AG04449 (cell line): ENCODE measurements at regions of chr1 and their contacts with region 1.

Region 1: DNA sequence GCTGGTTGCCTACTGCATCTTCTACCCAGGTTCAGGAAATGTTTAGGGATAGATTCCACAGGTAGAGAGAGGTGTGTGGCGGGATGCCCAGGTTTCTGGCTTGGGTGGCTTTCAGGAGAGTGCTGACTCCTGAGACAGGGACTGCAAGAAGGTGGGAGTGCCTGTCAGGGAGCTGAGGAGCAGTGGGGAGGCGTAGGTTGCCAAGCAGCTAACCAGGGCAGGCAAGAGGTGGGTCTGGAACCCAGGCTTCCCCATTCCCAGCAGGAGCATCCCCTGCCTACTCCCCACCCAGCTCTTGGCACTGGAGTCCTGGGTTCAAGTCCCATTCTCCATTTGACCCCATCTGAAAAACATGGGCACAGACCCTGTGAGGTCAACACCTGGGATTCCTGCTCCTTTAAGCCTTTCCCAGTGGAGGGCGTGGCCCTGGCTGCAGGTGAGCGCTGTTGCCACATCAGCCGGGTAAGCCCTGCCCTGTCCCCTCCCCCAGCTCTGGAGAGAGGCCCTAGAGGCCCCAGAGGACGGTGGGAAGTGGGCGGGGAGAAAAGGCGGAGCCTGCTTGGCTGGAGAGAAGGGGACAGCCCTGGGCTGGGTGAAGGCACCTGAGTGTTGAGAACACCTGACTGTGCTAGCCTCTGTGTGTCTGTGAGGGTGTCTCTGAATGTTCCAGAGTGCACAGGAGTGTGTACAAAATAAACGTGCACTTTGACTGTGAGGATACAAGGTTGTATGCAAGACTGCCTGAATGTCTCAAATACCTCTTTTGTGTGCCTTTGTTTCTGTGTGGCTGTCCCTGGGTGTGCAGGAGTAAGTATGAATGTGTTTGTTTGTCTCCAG is 14.0 kb upstream of the SYNC start:
- DNase-seq: no peak
- H3K4me3 ChIP-seq: no peak overlapping the region
- CTCF ChIP-seq: no peak

Region 2: DNA sequence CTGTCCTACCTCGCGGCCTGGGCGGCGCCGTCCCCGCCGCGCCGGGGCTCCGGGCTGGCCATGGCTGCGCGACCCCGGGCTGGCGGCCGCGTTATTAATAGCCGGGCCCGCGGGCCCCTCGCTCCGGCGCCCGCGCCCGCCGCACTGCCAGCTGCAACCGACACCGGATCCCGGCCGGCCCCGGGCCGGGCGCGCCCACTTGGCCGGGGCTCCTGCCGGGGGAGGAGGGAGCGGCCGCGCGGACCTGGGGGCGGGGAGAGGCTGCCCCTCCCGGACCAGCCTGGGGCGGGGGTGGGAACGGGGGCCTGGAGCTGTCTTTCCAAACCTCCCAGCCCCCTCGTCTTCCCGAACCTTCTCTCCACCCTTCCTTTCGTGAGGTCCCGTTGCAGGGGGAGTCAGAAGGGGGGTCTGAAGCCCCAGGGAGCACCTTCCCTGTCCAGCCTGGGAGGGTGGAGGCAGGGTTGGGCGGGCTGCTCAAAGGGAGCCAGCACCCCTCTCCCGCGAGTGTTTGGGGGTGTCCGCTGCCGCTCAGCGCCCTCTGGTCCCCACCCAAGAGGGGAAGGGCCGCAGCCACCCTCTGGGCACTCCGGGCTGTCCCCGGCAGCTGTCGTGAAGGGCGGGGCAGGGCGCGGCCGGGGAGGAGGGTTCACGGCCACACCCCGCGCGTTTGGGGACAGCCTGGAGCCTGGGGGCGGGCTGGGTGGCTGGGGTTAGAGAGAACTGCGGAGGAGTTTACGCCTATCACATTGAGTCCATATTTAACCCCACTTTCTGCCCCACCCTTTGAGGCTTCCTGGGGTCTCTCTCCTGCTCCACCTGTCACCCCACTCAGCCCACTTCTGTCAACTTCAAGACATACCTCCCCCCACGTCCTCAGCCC is 13.7 kb before region 1 on chr1 and contains the start of gene SYNC:
- CTCF ChIA-PET with region 1: interaction called, 19 read pairs
- POLR2A ChIA-PET with region 1: interaction called, 15 read pairs
- DNase-seq: peak; percentile 71
- H3K4me3 ChIP-seq: peak within 1 kb of the TSS; percentile 89
- CTCF ChIP-seq: no peak

Region 3: GRCh38 chr1:32741413-32742198 is 25.1 kb after region 1 on chr1:
- CTCF ChIA-PET with region 1: interaction called, 17 read pairs
- POLR2A ChIA-PET with region 1: no interaction called
- DNase-seq: no peak
- H3K4me3 ChIP-seq: peak overlapping the region; percentile 74
- CTCF ChIP-seq: peak; percentile 55

Region 4: GRCh38 chr1:32761253-32761880 is 44.8 kb after region 1 on chr1:
- CTCF ChIA-PET with region 1: interaction called, 299 read pairs
- POLR2A ChIA-PET with region 1: no interaction called
- DNase-seq: no peak
- H3K4me3 ChIP-seq: no peak overlapping the region
- CTCF ChIP-seq: no peak

Region 5: DNA sequence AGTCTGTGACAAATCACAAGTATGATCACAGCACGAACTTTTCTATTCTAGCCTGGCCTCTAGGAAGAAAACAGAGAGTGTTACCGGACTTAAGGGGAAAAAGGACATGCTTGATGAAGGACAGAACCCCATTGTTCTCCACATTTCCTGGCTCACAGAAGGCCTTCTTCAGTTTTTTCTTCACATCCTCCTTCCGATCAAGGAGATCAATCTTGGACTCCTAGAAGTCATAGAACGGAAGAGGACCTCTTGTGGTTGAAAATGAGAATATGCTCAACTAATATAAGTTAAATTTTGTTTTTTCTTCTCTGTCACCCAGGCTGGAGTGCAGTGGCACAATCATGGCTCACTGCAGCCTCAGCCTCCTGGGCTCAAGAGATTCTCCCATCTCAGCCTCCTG is 70.3 kb after region 1 on chr1:
- CTCF ChIA-PET with region 1: interaction called, 34 read pairs
- POLR2A ChIA-PET with region 1: interaction called, 3 read pairs
- DNase-seq: no peak
- H3K4me3 ChIP-seq: no peak overlapping the region
- CTCF ChIP-seq: no peak

Region 6: GRCh38 chr1:32798679-32799416 is 82.3 kb after region 1 on chr1:
- CTCF ChIA-PET with region 1: interaction called, 12 read pairs
- POLR2A ChIA-PET with region 1: no interaction called
- DNase-seq: no peak
- H3K4me3 ChIP-seq: no peak overlapping the region
- CTCF ChIP-seq: no peak

Region 7: GRCh38 chr1:32876341-32877210 is 160.0 kb after region 1 on chr1:
- CTCF ChIA-PET with region 1: interaction called, 17 read pairs
- POLR2A ChIA-PET with region 1: no interaction called
- DNase-seq: no peak
- H3K4me3 ChIP-seq: no peak overlapping the region
- CTCF ChIP-seq: peak; percentile 95